Heart right ventricle (tissue), 16 donors: ENCODE measurements at regions of chr15 and their contacts with region 1.

Region 1: DNA sequence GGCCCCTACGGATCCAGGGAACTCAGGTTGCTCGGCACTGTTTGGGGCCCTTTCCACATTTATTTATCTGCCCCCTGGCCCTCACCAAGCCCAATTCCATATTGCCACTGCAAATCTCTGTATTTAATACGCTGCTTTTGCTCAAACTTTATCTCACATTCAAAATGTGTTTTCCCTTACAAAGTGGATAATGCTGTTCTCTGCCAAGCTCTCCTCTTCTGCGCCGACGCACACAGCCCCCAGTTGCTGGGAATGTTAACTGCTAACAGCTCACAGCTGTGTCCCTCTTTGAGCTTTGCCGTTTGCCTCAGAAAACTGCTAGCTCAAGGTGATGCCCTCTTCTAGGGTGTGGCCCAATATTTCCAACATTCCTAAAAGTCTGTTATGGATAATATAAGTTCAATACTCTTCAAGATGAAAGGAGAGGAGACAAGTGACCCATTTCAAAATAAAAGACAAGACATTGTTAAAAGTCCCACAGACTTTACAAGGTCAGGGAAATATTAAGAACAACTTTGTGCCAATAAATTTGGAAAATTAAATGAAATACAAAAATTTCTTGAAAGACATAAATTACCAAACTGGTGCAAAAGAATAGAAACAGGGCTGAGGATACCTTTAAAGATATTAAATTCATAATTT is 12.6 kb upstream of the FBN1 start:
- DNase-seq: peak in 1 of 2 donors; percentile 20
- ATAC-seq: peak in 7 of 8 donors; percentile 33 to 72 (median 54)
- H3K4me3 ChIP-seq: no peak overlapping the region
- H3K27ac ChIP-seq: peak overlapping the region in 5 of 10 donors; percentile 29 to 62 (median 45)
- H3K4me1 ChIP-seq: peaks cover 0 to 4% (median 0%) of the 10 kb centered on the region in 9 donors
- H3K27me3 ChIP-seq: no peaks in the 10 kb centered on the region
- CTCF ChIP-seq: no peak

Region 2: GRCh38 chr15:48722764-48723661 is 64.9 kb after region 1 on chr15:
- intact Hi-C with region 1: loop called in 1 of 10 experiments (anchors 10 kb)
- DNase-seq: no peak
- ATAC-seq: peak in 1 of 8 donors; percentile 77
- H3K4me3 ChIP-seq: no peak overlapping the region
- H3K27ac ChIP-seq: peak overlapping the region in 3 of 10 donors; percentile 36 to 51 (median 43)
- H3K4me1 ChIP-seq: peaks cover 0 to 9% (median 0%) of the 10 kb centered on the region in 9 donors
- H3K27me3 ChIP-seq: no peaks in the 10 kb centered on the region
- CTCF ChIP-seq: no peak

Region 3: GRCh38 chr15:48794697-48795134 is 136.6 kb after region 1 on chr15:
- intact Hi-C with region 1: loop called in 1 of 10 experiments (anchors 10 kb)
- DNase-seq: no peak
- ATAC-seq: peak in 5 of 8 donors; percentile 42 to 70 (median 52)
- H3K4me3 ChIP-seq: peak overlapping the region in 2 of 10 donors; percentile 5 to 11
- H3K27ac ChIP-seq: peak overlapping the region in 6 of 10 donors; percentile 22 to 87 (median 35)
- H3K4me1 ChIP-seq: peaks cover 0 to 30% (median 5%) of the 10 kb centered on the region in 9 donors
- H3K27me3 ChIP-seq: no peaks in the 10 kb centered on the region
- CTCF ChIP-seq: no peak